CD8-positive, alpha-beta T cell (primary cell): ENCODE measurements at regions of chr22 and their contacts with region 1.

Region 1: DNA sequence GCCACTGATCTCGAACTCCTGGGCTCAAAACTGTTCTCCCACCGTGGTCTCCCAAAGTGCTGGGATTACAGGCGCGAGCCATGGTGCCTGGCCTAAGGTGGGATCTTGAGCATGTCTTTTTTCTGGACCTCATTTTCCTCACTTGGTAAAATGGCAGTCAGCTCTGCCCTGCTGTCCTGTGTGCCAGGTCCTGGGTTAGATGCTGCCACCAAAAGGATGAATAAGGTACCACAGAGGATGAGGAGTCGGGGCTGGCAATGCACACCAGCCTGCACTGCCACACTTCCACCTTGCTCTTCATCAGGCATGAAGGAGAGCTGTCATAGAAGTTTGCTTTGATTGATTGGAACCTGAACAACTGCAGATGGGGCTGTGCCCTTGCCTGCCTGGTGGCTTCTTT is 32.3 kb downstream of the ACO2 start:
- DNase-seq: peak in 2 of 9 experiments; percentile 31 to 50
- ATAC-seq: peak; percentile 61
- H3K4me3 ChIP-seq: no peak overlapping the region
- H3K4me3 Mint-ChIP-seq: no peak overlapping the region
- H3K27ac ChIP-seq: no peak overlapping the region
- H3K27ac Mint-ChIP-seq: no peak overlapping the region
- H3K4me1 ChIP-seq: no peaks in the 10 kb centered on the region
- H3K4me1 Mint-ChIP-seq: no peaks in the 10 kb centered on the region
- H3K27me3 ChIP-seq: no peaks in the 10 kb centered on the region
- H3K27me3 Mint-ChIP-seq: no peaks in the 10 kb centered on the region
- CTCF ChIP-seq: no peak

Region 2: GRCh38 chr22:41517172-41518047 is 16.2 kb after region 1 on chr22:
- CTCF ChIA-PET with region 1: interaction called, 12 read pairs
- POLR2A ChIA-PET with region 1: interaction called, 3 read pairs
- intact Hi-C with region 1: no loop called
- DNase-seq: peak in 6 of 9 experiments; percentile 23 to 62 (median 48)
- ATAC-seq: no peak
- H3K4me3 ChIP-seq: no peak overlapping the region
- H3K4me3 Mint-ChIP-seq: no peak overlapping the region
- H3K27ac ChIP-seq: no peak overlapping the region
- H3K27ac Mint-ChIP-seq: no peak overlapping the region
- H3K4me1 ChIP-seq: no peaks in the 10 kb centered on the region
- H3K4me1 Mint-ChIP-seq: no peaks in the 10 kb centered on the region
- H3K27me3 ChIP-seq: no peaks in the 10 kb centered on the region
- H3K27me3 Mint-ChIP-seq: no peaks in the 10 kb centered on the region
- CTCF ChIP-seq: peak; percentile 59

Region 3: GRCh38 chr22:41526837-41527799 is 25.9 kb after region 1 on chr22:
- CTCF ChIA-PET with region 1: interaction called, 11 read pairs
- POLR2A ChIA-PET with region 1: no interaction called
- intact Hi-C with region 1: no loop called
- DNase-seq: peak; percentile 49 to 82 (median 72)
- ATAC-seq: peak; percentile 74
- H3K4me3 ChIP-seq: no peak overlapping the region
- H3K4me3 Mint-ChIP-seq: no peak overlapping the region
- H3K27ac ChIP-seq: peak overlapping the region in 1 of 2 experiments; percentile 42
- H3K27ac Mint-ChIP-seq: peak overlapping the region; percentile 70
- H3K4me1 ChIP-seq: peaks cover 19% of the 10 kb centered on the region
- H3K4me1 Mint-ChIP-seq: peaks cover 15% of the 10 kb centered on the region
- H3K27me3 ChIP-seq: no peaks in the 10 kb centered on the region
- H3K27me3 Mint-ChIP-seq: no peaks in the 10 kb centered on the region
- CTCF ChIP-seq: peak; percentile 71

Region 4: DNA sequence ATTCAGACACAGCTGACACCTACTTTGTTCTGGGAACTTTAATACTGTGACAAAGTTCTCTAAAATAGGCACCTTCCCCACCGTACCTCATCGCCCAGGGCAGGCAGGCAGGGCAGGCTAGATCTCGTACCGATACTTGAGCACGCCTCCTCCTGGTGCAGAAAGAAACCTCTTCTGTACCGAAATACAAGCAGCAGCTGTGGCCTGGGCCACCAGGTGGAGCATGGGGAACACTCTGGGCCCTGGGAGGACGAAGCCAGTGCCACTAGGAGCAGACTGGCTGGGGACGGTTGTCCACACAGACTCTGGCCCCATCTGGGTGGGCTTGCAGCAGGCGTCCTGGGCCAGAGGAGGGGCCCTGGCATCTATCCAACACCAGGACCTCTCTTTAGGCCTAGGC is 75.7 kb after region 1 on chr22:
- CTCF ChIA-PET with region 1: no interaction called
- POLR2A ChIA-PET with region 1: no interaction called
- intact Hi-C with region 1: no loop called
- DNase-seq: peak in 5 of 9 experiments; percentile 23 to 53 (median 39)
- ATAC-seq: peak; percentile 61
- H3K4me3 ChIP-seq: no peak overlapping the region
- H3K4me3 Mint-ChIP-seq: no peak overlapping the region
- H3K27ac ChIP-seq: no peak overlapping the region
- H3K27ac Mint-ChIP-seq: no peak overlapping the region
- H3K4me1 ChIP-seq: no peaks in the 10 kb centered on the region
- H3K4me1 Mint-ChIP-seq: no peaks in the 10 kb centered on the region
- H3K27me3 ChIP-seq: no peaks in the 10 kb centered on the region
- H3K27me3 Mint-ChIP-seq: no peaks in the 10 kb centered on the region
- CTCF ChIP-seq: no peak